ENCODE measurements at regions of chr16 and their contacts with region 1.

Region 1: DNA sequence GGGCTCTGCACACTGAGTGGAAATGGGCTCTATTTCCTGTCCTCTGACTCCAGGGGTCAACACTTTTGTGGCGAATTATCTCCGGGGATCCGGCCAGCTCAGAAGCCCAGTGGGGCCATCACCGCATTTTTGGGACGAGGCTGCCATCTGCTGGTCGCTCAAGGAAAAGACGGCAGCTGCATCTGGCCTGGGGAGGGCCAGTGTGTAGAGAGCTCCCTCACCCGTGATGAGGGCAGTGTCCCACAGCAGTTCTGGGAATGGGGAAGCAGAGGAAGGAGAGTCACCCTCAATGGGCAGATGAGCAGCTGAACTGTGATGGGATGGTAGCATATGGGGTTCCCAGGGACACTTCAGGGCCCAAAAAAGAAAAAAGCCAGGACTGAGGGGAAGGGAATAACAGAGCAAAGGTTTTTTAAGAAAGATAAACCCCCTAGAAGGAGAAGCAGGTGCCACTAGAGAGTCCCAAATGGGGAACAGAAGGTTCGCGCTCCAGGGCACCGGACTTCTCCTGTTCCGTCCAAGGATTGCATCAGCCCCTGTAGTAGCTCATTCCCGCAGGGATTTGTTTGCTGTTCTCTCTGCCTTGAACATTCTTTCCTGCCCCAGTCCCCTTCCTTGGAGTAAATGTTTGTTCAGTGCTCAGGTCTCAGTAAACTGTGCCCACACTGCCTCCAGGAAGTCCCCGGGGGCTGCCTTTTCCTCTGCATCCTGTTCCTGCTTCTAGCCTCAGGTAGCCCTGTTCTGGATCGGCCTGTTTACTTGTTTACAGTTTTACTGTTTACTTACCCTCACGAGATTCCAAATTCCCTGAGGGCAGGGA is 9.3 kb upstream of the ABCC12 start:
- DNase-seq: peak; percentile 36 to 85
- H3K4me3 ChIP-seq: no peak overlapping the region
- H3K4me1 ChIP-seq: no peaks in the 10 kb centered on the region
- H3K27me3 ChIP-seq: no peaks in the 10 kb centered on the region

Region 2: GRCh38 chr16:46947900-46948547 is 1217.1 kb before region 1 on chr16:
- in situ Hi-C with region 1: loop called (anchors 5 kb)
- DNase-seq: peak; percentile 58 to 62
- H3K4me3 ChIP-seq: no peak overlapping the region
- H3K4me1 ChIP-seq: no peaks in the 10 kb centered on the region
- H3K27me3 ChIP-seq: no peaks in the 10 kb centered on the region

Region 3: DNA sequence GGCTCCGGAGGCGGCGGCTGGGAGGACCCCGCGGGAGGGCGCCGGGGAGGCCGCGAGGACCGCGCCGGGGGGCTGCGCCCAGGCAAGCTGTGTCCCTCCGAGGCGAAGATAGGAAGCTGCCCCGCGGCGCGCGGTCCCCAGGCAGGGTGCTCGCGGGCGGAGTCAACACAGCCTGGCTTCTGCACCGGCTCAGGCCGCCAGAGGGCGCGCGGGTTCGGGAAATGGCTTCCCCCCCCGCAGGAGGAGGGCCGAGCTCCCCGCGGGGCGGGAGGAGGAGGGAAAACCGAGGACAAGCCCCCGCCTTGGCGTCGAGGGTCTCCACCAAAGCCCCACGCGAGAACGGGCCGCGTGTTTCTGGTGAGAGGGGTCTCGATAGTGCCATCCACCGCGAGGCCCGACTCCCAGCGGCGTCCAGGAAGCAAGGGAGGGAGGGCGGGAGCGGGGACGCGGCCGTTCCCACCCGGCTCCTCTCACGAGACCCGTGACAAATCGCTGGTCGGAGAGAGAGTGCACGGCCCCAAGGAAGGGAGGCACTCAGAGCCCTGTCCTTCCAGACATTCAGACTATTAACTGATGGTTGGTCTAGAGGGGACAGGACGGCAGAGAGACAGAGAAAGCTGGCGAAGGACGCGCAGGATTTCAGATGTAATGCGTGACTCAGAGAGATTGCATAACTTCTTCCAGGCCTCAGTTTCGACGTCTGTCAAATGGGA is 1127.2 kb before region 1 on chr16:
- in situ Hi-C with region 1: loop called (anchors 10 kb)
- DNase-seq: peak; percentile 76 to 95
- H3K4me3 ChIP-seq: peak overlapping the region; percentile 44
- H3K4me1 ChIP-seq: peaks cover 4% of the 10 kb centered on the region; the same call in 1 of the 2 replicates
- H3K27me3 ChIP-seq: no peaks in the 10 kb centered on the region

Region 4: GRCh38 chr16:47141773-47142485 is 1023.2 kb before region 1 on chr16:
- in situ Hi-C with region 1: loop called (anchors 10 kb)
- DNase-seq: peak; percentile 88 to 92
- H3K4me3 ChIP-seq: peak overlapping the region; percentile 55
- H3K4me1 ChIP-seq: peaks cover 6% of the 10 kb centered on the region; the same call in 1 of the 2 replicates
- H3K27me3 ChIP-seq: no peaks in the 10 kb centered on the region

Region 5: DNA sequence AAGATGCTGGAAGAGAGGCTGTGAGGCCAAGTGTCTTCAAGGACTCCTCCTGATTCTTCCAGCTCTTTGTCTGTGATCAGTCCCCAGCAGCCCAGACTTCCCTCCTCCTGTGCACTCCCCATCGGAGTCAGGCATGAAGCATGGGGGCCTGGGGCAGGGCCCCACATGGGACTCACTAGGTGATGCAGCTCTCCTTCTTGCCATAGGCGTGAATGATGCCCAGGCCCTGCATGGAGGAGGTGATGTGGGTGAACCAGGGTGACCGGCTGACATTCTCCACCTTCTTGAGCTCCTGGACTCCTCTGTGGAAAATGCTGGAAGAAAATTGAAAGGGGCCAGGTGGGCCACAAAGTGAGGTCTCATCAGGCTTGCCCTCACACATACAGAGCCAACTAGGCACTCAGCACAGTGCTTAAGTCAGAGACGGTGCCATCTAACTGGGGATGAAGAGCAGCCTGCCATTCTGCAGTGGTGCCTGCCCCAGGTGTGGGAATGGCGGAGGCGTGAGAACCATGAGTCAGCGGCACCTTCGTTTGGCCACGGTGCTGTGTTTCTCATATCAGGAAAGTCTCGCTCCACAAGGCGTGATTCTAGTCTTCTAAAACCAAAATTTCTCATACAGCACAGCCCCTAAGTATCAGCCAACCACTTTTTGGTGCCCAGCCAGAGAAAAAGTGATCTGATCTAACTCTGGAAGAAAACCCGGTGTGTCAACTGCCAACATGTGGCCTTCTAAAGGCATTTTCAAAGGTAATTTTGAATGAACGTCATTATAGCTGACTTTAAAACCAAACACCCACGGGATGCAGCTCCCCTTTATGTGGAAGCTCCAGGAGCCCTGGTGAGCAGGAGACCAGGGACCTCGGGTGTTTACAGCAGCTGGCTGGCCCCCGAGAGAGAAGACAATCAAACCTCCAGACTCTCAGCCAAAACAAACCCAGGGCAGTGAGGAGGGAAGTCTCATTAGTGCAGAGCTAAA is 64.1 kb before region 1 on chr16:
- in situ Hi-C with region 1: no loop called
- DNase-seq: no peak
- H3K4me3 ChIP-seq: no peak overlapping the region
- H3K4me1 ChIP-seq: no peaks in the 10 kb centered on the region
- H3K27me3 ChIP-seq: no peaks in the 10 kb centered on the region

Measured in HAP-1 (cell line).